Activated CD8-positive, alpha-beta T cell treated with anti-CD3 and anti-CD28 coated beads for 36 hours (primary cell): ENCODE measurements at regions of chr18 and their contacts with region 1.

Region 1: DNA sequence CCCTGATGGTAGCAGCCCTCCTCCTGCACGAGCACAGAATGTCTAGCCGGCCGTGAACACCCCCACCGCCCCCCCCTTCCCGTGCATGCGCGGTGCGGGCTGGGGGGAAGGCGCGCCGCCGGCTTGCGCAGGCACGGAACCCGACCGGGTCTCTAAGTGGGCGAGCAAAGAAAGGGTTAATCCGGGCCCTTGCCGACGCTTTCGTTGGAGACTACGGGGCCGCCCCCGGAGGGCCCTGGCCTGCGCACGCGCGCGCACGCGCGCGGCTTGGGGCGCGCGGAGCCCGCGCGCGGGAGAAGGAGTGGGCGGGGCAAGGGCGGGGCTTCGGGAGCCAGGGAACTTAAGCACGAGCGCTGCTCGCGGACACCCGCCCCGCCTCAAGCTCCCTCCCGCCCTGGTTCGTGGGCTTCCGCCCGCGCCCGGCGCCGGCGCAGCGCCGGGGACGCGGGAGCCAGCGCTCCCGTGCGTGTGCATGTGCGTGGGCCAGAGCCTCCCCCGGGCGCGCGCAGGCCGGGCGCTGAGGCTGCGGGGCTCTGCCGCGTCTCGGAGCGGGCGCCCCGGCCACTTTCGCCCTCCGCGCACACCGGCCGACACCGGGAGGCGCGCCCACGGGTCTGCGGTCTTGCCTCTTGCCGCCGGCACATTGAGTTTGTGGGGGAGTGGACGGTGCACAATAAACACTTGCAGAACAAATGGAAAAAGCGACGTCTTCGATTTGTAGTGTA is 617 bp upstream of the ZBTB14 start:
- DNase-seq: peak; percentile 95
- ATAC-seq: peak; percentile 78
- H3K4me3 Mint-ChIP-seq: peak overlapping the region; percentile 83
- H3K27ac Mint-ChIP-seq: peak overlapping the region; percentile 97
- H3K4me1 Mint-ChIP-seq: peaks cover 28% of the 10 kb centered on the region
- H3K27me3 Mint-ChIP-seq: peaks cover under 1% of the 10 kb centered on the region
- CTCF ChIP-seq: no peak

Region 2: DNA sequence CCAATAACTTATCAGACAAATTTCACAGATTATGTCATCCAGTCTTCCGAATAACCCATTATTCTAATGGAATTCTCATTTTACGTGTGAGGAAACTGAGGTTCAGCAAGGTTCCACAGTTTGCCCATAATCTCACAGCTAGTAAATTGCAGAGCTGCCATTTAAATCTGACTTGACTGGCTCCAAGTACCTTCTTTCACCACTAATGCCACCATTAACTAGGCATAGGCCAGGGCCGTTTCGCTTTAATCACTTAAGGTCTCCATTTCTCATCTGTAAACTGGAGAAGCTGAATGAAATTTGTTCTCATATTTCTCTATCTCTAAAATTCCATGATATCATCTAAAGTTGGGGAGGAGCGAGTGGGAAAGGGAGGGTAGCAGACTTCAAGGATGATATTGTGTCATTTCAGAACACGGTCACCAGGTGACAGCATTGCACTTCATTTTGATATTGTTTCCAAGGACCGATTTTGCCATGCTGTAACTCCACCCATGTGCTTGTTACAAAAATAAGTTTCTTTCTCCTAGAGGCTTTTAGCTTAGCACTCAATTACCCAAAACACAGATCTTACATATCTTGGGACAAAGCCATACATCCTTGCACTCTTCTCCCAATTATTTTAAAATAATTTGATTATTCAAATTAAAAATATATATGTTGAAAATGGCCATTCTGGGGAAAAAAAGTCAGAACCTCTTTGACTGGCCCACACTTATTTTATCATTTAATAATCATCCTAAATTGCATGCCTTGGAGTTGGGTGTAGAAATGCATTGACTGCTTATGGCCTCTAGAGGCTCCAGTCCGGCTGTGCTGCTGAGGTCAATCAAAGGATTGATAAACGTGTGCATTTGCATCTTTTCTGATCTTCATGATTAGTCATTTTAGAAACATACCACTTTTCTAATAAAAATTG is 222.9 kb before region 1 on chr18:
- CTCF ChIA-PET with region 1: no interaction called
- POLR2A ChIA-PET with region 1: no interaction called
- intact Hi-C with region 1: loop called (anchors 10 kb)
- DNase-seq: peak; percentile 42
- ATAC-seq: peak; percentile 74
- H3K4me3 Mint-ChIP-seq: no peak overlapping the region
- H3K27ac Mint-ChIP-seq: no peak overlapping the region
- H3K4me1 Mint-ChIP-seq: no peaks in the 10 kb centered on the region
- H3K27me3 Mint-ChIP-seq: peaks cover 2% of the 10 kb centered on the region
- CTCF ChIP-seq: peak; percentile 83

Region 3: GRCh38 chr18:5284808-5285207 is 11.3 kb before region 1 on chr18:
- CTCF ChIA-PET with region 1: interaction called, 3 read pairs
- POLR2A ChIA-PET with region 1: interaction called, 12 read pairs
- intact Hi-C with region 1: no loop called
- DNase-seq: no peak
- ATAC-seq: no peak
- H3K4me3 Mint-ChIP-seq: no peak overlapping the region
- H3K27ac Mint-ChIP-seq: no peak overlapping the region
- H3K4me1 Mint-ChIP-seq: peaks cover 34% of the 10 kb centered on the region
- H3K27me3 Mint-ChIP-seq: no peaks in the 10 kb centered on the region
- CTCF ChIP-seq: no peak

Region 4: GRCh38 chr18:5309888-5310470 is 13.8 kb after region 1 on chr18:
- CTCF ChIA-PET with region 1: interaction called, 8 read pairs
- POLR2A ChIA-PET with region 1: interaction called, 41 read pairs
- intact Hi-C with region 1: no loop called
- DNase-seq: peak; percentile 56
- ATAC-seq: peak; percentile 94
- H3K4me3 Mint-ChIP-seq: peak overlapping the region; percentile 78
- H3K27ac Mint-ChIP-seq: peak overlapping the region; percentile 85
- H3K4me1 Mint-ChIP-seq: peaks cover 25% of the 10 kb centered on the region
- H3K27me3 Mint-ChIP-seq: no peaks in the 10 kb centered on the region
- CTCF ChIP-seq: no peak

Region 5: DNA sequence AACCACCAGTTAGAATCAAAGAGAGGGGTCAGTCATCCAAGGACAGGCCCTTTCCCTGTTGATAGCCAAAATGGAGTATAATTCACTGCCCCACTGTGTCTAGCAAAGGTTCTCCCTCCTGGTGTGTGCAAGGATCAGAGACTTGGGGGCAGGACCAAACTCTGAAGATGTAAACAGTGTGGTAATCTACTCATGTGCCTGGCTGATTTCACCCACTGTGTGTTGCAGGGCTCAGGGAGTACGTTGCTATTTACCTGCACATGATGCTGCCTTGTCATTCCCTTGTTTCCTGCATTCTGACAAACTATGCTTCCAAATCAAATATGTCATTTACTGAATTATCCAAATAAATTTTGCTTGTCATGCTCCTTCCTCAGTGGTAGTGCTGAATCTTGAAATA is 58.8 kb after region 1 on chr18:
- CTCF ChIA-PET with region 1: no interaction called
- POLR2A ChIA-PET with region 1: no interaction called
- intact Hi-C with region 1: no loop called
- DNase-seq: no peak
- ATAC-seq: no peak
- H3K4me3 Mint-ChIP-seq: no peak overlapping the region
- H3K27ac Mint-ChIP-seq: no peak overlapping the region
- H3K4me1 Mint-ChIP-seq: no peaks in the 10 kb centered on the region
- H3K27me3 Mint-ChIP-seq: peaks cover 2% of the 10 kb centered on the region
- CTCF ChIP-seq: no peak

Region 6: DNA sequence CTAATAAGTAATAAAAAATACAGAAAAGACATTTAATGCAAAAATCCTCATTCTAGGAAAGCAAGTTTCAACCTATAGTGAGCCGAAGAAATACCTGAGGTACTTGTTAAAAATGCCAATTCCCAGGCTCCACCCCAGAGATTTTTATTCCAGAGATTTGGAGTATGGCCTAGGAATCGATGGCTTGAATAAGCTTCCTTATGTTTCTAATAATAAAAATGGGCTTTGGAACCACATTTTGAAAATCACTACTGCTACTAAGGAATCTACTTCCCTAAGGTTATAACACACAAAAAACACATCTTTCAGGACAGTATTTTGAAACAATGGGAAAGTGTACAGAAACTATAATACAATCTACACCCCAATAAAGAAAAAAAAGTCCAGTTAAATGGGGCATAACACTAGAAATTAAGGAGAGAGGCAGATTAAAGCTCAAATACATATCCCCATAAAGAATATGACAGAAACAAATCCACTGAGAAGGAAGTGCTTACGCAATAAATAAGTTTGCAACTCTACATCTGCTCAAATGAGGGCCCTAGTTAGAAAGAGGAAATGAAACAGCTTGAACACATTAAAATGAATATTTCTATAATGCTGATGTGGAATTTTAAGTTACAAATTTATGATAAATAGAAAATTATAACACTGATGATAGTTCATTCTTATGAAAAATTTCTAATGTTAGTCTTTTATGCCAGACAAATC is 144.0 kb after region 1 on chr18:
- CTCF ChIA-PET with region 1: no interaction called
- POLR2A ChIA-PET with region 1: no interaction called
- intact Hi-C with region 1: no loop called
- DNase-seq: no peak
- ATAC-seq: no peak
- H3K4me3 Mint-ChIP-seq: no peak overlapping the region
- H3K27ac Mint-ChIP-seq: no peak overlapping the region
- H3K4me1 Mint-ChIP-seq: no peaks in the 10 kb centered on the region
- H3K27me3 Mint-ChIP-seq: peaks cover 4% of the 10 kb centered on the region
- CTCF ChIP-seq: no peak